Right ventricle myocardium inferior (tissue), 1 donor: ENCODE measurements at regions of chr3 and their contacts with region 1.

Region 1: DNA sequence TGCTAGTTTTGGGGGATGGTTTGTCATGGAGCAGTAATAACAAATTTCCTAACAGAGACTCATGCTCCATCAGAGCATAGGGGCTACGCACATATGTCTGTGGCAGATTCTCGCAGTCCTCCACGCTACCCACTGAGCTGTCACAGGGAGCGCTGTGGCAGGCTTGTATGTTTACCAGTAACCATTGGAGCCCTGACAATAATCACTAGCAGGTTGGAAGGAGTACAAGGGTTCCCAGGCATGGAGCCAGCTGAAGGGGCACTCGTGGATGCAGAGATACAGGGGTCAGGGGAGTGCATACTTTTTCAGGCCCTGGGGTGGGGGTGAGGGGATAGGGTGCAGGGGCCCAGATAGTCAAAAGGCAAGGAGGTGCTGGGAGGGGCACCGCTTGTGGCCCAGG is 7.9 kb upstream of the GP9 start:
- DNase-seq: peak; percentile 76
- ATAC-seq: peak; percentile 83

Region 2: DNA sequence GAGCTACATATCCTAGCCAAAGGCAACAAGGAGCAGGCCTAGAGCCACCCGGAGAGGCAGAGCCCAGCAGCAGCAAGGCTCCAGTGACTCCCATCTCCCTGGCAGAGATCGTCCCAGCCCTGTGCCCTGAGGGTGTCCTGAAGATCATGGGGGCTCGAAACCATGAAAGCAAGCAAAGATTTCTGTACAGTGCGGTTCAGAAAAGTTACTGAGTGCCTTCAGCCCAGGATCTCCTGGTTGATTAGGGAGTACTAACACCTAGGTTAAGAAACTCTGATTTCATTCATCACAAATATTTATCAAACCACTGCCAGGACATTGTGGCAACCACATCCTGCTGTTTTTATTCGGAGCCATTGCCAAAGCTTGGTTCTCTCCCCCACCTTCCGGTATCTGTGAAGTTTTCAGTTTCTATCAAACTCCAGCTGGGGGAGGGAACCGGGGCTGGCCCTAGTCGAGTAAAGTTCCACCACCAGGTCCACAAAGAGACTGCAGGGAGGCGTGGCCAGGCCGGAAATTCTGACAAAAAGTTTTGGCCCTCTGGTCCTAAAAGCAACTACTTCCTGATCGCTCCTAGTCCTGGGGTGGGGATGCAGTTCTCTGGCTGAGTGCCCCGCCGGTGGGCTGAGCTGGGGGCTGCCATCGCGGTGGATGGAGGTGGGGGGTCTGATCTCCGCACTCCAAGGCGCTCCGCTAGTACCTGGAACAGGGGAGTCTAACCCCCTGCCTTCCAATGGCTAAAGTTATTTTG is 67.8 kb after region 1 on chr3:
- intact Hi-C with region 1: loop called (anchors 1 kb)
- DNase-seq: peak; percentile 90
- ATAC-seq: peak; percentile 62